ENCODE measurements at regions of chr14 and their contacts with region 1.

Region 1: DNA sequence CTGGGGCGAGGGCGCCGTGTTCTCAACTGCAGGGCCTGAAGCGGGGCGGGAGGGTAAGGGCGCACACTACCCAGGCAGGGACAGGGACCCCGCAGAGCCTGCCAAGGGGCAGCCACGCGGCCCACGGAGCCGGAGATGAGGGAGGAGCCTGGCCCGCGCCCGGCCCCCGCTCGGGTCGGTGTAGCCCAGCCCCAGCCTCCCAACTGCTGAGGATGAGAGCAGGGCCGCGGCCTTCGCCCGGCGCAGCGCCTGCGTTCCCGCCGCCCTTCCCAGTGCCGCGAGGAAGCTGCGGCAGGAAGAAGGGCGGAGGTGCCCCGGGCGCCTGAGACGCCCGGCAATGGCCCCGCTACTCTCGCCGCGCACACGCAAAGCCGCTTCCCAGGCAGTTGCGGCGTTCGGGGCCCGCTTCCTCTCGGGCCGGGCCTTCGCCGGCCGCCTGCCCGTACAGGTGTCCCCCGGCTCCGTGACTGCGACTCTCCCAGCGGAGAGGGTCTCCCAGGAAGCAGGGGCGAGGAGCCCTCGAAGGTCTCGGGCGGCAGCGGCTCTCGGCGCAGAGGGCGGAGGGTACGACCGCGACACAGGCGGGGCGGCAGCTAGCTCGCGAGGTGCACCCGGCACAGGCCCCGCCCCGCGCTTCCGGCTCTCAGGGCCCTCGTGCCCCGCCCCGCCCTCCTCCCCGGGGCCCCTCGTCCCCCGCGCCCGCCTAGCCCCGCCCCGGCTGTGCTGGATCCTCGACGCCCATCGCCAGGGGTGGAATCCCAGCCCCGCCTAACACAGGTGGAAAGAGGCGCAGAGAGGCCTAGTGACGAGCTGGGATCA is 24.8 kb upstream of the YY1 start:
- DNase-seq: peak; percentile 88
- H3K4me3 Mint-ChIP-seq: peak overlapping the region; percentile 85
- H3K27ac Mint-ChIP-seq: peak overlapping the region; percentile 87
- H3K4me1 Mint-ChIP-seq: peaks cover 25% of the 10 kb centered on the region
- H3K27me3 Mint-ChIP-seq: peaks cover 2% of the 10 kb centered on the region

Region 2: DNA sequence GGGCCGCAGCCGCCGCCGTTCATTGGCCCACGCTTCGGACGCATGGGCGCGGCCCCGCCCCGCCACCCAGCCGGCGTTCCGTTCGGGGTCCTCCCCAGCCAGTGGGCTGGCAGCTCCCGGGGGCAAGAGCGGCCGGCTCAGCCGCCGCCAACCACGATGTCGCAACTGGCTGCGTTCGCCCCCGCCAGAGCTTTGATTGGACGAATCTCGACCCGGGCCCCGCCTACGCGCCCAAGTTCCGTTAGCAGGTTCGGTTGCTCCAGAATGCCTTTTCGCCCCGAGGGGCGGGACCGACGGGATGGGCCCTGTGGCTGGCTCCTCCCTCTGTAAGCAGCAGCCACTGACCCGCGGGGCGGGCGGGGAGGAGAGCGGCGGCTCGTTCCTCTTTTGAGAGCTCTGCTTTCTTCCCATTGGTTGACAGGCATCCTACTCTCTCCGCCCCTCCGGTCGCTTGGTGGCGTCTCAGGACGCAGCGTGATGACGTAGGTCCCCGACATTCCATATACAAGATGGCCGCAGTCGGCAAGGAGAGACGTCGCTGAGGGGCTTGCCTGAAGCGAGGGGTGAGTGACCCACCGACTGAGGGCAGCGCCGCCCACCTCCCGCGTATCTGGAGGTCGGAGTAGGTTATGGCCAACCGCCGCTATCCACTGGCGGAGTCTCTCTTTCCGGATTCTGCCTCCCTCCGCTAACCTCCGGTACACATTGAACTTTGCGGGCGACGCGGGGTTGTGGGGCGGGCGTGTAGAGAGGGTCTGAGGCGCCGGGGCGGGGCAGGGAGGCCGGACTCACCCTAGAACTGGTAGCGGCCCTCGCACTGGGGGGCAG is 733.0 kb before region 1 on chr14 and contains the start of gene CCNK:
- intact Hi-C with region 1: loop called (anchors 2 kb)
- DNase-seq: peak; percentile 100
- H3K4me3 Mint-ChIP-seq: peak within 1 kb of the TSS; percentile 98
- H3K27ac Mint-ChIP-seq: peak within 1 kb of the TSS; percentile 98
- H3K4me1 Mint-ChIP-seq: peaks cover 49% of the 10 kb centered on the region
- H3K27me3 Mint-ChIP-seq: no peaks in the 10 kb centered on the region
- total RNA-seq, gene CCNK: 80.8 and 87.1 TPM in 2 replicates

Region 3: GRCh38 chr14:99971087-99971940 is 242.9 kb before region 1 on chr14:
- intact Hi-C with region 1: loop called (anchors 2 kb)
- DNase-seq: peak; percentile 68
- H3K4me3 Mint-ChIP-seq: peak overlapping the region; percentile 80
- H3K27ac Mint-ChIP-seq: no peak overlapping the region
- H3K4me1 Mint-ChIP-seq: peaks cover 13% of the 10 kb centered on the region
- H3K27me3 Mint-ChIP-seq: peaks cover 21% of the 10 kb centered on the region

Measured in activated T-helper 1 cell treated with anti-CD3 and anti-CD28 coated beads, Interleukin-12 subunit alpha, Interleukin-12 subunit beta, Interleukin-2, Interleukin-4 antibody, amounts not matched to agents 30 ng/mL and 10 ng/mL and 1 ng/mL, durations not matched to agents 14 hours and 24 hours and 36 hours (primary cell).